ENCODE measurements at regions of chr6 and their contacts with region 1.

Region 1: DNA sequence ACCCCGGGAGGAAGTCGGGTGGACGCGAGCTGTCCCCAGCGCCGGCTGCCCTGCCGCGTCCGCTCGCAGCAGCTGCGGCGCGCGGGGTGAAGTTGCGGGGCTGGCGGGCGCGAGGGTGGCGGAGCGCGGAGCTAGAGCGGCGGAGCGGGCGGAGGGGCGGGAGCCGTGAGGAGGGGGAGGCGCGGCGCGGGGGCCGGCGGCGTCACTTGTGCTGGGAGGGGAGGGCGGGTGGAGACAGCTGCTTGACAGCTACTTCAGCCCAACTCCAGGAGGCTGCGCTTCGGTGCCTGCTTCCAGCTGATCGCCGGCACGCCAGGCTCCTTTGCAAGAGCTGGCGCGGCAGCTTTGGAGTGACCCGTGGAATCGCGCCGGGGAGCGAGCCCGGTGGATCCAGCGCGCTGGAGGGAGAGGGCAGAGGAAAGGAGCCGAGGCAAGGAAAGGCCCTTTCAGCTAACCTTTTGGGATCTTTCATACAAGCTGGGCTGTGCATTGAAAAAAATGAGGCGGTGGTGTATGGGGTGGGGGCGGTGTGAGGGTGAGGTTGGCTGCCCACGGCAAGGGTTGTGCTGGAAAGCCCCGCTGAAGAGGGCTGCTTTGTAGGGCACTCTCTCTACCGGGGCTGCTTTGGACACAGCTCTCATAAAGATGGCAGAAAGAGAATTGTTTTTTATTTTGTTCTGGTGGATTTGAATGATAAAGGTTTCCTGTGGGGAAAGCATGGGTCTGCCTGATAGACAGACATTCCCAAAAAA is 24.6 kb downstream of the RIPOR2 start:
- DNase-seq: peak; percentile 55 to 74
- ATAC-seq: peak; percentile 63 to 74 (median 74)
- H3K4me3 ChIP-seq: peak overlapping the region; percentile 43
- H3K4me3 Mint-ChIP-seq: peak overlapping the region; percentile 88
- H3K27ac ChIP-seq: peak overlapping the region; percentile 82
- H3K27ac Mint-ChIP-seq: peak overlapping the region; percentile 89 to 93
- H3K4me1 ChIP-seq: peaks cover 81% of the 10 kb centered on the region
- H3K4me1 Mint-ChIP-seq: peaks cover 96 to 98% of the 10 kb centered on the region in 2 donors
- H3K27me3 ChIP-seq: no peaks in the 10 kb centered on the region
- H3K27me3 Mint-ChIP-seq: no peaks in the 10 kb centered on the region
- CTCF ChIP-seq: no peak

Region 2: DNA sequence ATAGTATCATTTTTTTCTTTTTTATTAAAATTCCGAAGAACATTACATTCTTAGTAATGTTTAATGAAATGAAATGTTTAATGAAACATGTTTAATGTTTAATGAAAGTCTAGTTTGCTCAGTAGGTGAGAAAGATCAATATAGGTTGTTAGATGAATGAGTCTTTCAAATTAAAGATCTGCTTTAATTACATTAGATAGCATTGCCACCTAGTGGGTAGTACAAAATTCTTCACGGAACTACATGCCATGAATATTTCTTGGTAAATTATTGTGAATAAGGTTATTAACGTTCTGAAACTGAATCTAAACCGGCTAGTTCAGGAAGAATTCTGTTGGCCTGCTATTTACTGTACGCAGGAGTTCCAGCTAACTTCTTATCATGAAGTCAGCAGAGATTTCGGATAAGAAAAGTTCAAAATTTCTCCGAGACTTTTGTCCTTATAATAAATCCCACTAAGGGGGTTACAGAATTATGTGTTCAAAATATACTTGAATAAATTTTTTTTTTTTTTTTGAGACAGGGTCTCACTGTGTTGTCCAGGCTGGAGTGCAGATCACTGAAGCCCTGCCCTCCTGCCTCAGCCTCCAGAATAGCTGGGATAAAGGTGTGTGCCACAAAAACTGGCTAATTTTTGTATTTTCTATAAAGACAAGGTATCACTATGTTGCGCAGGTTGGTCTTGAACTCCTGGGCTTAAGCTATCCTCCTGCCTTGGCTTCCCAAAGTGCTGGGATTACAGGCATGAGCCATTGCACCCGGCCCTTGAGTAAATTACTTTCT is 144.3 kb before region 1 on chr6:
- intact Hi-C with region 1: no loop called
- DNase-seq: peak in 1 of 2 donors; percentile 57
- ATAC-seq: peak; percentile 48 to 69 (median 66)
- H3K4me3 ChIP-seq: no peak overlapping the region
- H3K4me3 Mint-ChIP-seq: no peak overlapping the region
- H3K27ac ChIP-seq: no peak overlapping the region
- H3K27ac Mint-ChIP-seq: no peak overlapping the region
- H3K4me1 ChIP-seq: no peaks in the 10 kb centered on the region
- H3K4me1 Mint-ChIP-seq: no peaks in the 10 kb centered on the region
- H3K27me3 ChIP-seq: no peaks in the 10 kb centered on the region
- H3K27me3 Mint-ChIP-seq: no peaks in the 10 kb centered on the region
- CTCF ChIP-seq: peak; percentile 36

Region 3: GRCh38 chr6:24927985-24928745 is 17.0 kb after region 1 on chr6:
- intact Hi-C with region 1: loop called (anchors 1 kb)
- DNase-seq: peak in 1 of 2 donors; percentile 35
- ATAC-seq: peak in 1 of 3 donors; percentile 13
- H3K4me3 ChIP-seq: peak overlapping the region; percentile 13
- H3K4me3 Mint-ChIP-seq: peak overlapping the region; percentile 99
- H3K27ac ChIP-seq: peak overlapping the region; percentile 74
- H3K27ac Mint-ChIP-seq: peak overlapping the region; percentile 71 to 89
- H3K4me1 ChIP-seq: peaks cover 57% of the 10 kb centered on the region
- H3K4me1 Mint-ChIP-seq: peaks cover 89% of the 10 kb centered on the region in 2 donors
- H3K27me3 ChIP-seq: no peaks in the 10 kb centered on the region
- H3K27me3 Mint-ChIP-seq: no peaks in the 10 kb centered on the region
- CTCF ChIP-seq: no peak

Measured in natural killer cell (primary cell).